ENCODE measurements at regions of chr2 and their contacts with region 1.

Region 1: DNA sequence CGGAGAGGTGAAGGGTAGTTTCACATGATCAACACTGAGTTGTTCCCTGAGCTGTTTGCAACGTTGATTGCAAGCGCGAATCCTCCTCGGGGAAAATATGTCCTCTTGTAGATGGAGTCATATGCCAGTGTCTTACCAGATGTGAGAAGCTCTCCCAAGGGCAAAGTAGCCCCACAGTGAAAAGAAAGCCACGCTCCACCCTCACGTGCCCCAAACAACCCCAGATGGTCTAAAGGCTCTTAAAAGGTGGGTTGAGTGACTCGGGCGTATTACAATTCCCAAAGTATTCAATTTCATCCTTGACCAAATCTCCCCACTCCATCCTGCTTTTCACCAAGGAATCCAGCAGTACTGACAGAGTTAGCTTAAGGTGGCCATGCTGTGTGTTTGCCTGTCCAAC is 332.1 kb upstream of the SOX11 start:
- DNase-seq: no peak
- H3K4me3 ChIP-seq: no peak overlapping the region
- H3K27ac ChIP-seq: no peak overlapping the region
- H3K4me1 ChIP-seq: no peaks in the 10 kb centered on the region
- H3K27me3 ChIP-seq: no peaks in the 10 kb centered on the region
- CTCF ChIP-seq: no peak
- POLR2A ChIP-seq: no peak

Region 2: DNA sequence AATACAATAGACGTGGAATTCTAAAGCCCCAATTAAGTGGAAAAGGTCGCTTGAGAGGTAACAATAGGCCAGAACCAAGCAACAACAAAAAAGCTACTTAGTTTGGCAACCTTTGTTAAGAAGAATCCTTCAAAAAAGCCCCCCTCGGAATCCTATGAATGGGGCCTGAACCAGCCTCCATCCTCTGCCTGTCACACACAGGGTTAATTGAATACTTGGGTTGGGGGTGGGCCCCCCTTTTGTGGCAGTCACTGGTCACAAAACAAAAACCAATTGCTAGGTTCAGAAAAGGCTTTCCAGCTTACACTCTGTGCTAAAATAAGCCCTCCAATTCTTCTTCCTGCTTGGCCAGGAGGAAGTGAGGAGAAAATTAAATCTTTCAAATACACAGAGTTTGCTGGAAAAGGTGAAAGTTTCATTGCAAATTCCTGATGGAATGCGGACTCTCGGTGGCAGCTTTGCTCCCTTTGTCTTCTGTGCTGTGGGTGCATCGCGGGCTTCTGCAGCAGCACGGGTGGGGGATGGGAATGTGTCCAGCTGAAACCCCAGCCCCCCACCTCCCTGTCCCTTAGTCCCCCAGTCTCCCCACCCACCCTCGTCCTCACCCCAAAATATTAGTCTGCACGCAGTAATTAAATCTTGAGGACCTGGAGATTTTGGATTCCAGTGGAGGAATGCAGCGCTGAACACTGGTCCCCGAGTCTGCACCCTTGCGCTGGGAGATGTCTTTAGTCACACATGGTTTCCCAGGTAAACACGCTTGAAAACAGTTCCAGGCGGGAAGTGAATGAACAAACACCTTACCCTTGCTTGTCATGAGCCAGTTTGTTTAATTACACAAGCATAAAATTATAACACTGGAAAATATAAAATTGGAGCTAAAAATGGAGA is 586.4 kb after region 1 on chr2:
- CTCF ChIA-PET with region 1: no interaction called
- POLR2A ChIA-PET with region 1: no interaction called
- dilution Hi-C with region 1: no loop called
- intact Hi-C with region 1: loop called (anchors 5 kb)
- DNase-seq: no peak
- H3K4me3 ChIP-seq: no peak overlapping the region
- H3K27ac ChIP-seq: no peak overlapping the region
- H3K4me1 ChIP-seq: no peaks in the 10 kb centered on the region
- H3K27me3 ChIP-seq: no peaks in the 10 kb centered on the region
- CTCF ChIP-seq: no peak
- POLR2A ChIP-seq: no peak

Measured in endothelial cell of umbilical vein (primary cell).